ENCODE measurements at regions of chr1 and their contacts with region 1.

Region 1: GRCh38 chr1:20174937-20175666 is 10.8 kb upstream of the UBXN10 start:
- DNase-seq: no peak
- H3K4me3 ChIP-seq: no peak overlapping the region
- H3K27ac ChIP-seq: no peak overlapping the region
- H3K4me1 ChIP-seq: no peaks in the 10 kb centered on the region
- H3K27me3 ChIP-seq: no peaks in the 10 kb centered on the region; the same call in 1 of the 2 replicates
- CTCF ChIP-seq: no peak
- EP300 ChIP-seq: no peak
- RAD21 ChIP-seq: no peak

Region 2: DNA sequence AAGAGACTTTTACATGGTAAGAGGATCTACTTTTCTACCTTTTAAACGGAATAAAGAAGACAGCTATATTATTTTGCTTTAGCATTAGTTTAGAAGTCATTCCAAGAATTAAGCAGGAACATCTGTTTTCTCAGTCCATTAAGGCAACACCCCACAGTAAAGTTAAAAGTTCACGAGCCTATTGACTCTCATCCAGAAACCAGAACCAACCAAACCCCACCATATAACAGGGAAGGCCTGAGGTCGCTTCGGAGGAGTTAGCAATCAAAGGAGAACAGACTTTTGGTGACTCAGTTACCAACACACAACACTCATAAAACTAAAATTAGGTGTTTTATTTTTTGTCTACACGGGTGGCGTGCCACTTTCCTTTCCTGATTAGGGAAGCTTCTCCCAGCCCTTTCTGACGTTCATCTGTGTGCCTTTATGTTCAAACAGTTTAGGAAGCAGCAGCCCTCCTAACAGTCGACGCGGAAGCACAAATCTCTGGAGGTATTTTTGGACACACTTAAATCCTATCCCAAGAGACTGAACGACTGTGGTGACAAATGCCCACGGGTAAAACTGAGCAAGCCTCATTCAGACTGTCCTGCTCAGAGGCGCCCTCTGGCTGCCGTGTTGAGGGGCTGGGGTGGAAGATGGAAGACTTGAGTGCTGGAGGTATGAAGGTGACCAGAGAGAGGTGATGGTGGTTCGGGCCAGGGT is 19.8 kb after region 1 on chr1:
- CTCF ChIA-PET with region 1: interaction called, 10 read pairs
- POLR2A ChIA-PET with region 1: no interaction called
- DNase-seq: peak; percentile 57
- H3K4me3 ChIP-seq: peak overlapping the region in 1 of 2 experiments; percentile 49; a peak in 1 of 4 replicates
- H3K27ac ChIP-seq: no peak overlapping the region
- H3K4me1 ChIP-seq: no peaks in the 10 kb centered on the region; a peak in 1 of 4 replicates
- H3K27me3 ChIP-seq: peaks cover 12% of the 10 kb centered on the region; the same call in 1 of the 2 replicates
- CTCF ChIP-seq: peak; percentile 69
- EP300 ChIP-seq: no peak
- RAD21 ChIP-seq: peak; percentile 45